ENCODE measurements at regions of chr21 and their contacts with region 1.

Region 1: DNA sequence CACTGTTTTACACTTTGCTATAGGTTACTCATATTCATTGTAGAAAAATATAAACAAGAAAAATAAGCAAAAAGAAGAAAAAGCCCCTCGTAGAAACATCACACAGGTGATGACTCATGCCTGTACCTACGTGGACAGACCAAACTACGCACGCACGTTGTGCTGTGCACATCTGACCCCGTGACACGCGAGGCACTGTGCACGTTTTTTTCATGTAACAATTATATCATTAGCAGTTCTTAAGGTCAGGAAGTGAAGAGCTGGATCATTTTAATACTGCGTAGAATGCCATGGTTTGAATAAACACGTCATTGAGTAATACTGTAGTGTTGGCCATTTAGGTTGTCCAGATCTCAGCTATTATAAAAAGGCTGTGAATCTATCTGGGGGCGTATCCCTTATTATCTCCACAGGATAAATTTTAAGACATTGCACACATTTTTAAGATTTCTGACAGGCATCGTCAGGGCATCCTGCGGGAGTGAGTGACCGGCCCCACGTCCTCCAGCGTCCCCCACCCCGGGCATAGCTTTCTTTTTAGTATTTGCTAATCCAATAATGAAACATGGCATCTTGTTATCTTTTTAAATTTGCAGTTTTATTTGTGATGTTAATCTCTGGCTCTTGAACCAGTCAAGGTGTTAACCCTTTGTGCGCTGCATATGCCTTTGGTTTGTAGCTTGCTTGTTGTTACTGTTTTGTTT is 23.4 kb upstream of the ADARB1 start:
- DNase-seq: peak in 1 of 2 donors; percentile 88
- H3K4me3 ChIP-seq: no peak overlapping the region
- H3K27ac ChIP-seq: peak overlapping the region; percentile 98 to 99
- H3K4me1 ChIP-seq: peaks cover 21 to 55% of the 10 kb centered on the region in 2 donors
- H3K27me3 ChIP-seq: no peaks in the 10 kb centered on the region
- CTCF ChIP-seq: no peak

Region 2: GRCh38 chr21:44949779-44950198 is 101.1 kb before region 1 on chr21:
- intact Hi-C with region 1: loop called (anchors 2 kb)
- DNase-seq: peak; percentile 50 to 94
- H3K4me3 ChIP-seq: peak overlapping the region in 1 of 2 donors; percentile 10
- H3K27ac ChIP-seq: peak overlapping the region; percentile 82 to 96
- H3K4me1 ChIP-seq: peaks cover 23 to 40% of the 10 kb centered on the region in 2 donors
- H3K27me3 ChIP-seq: no peaks in the 10 kb centered on the region
- CTCF ChIP-seq: peak; percentile 96 to 98 (median 97)

Region 3: DNA sequence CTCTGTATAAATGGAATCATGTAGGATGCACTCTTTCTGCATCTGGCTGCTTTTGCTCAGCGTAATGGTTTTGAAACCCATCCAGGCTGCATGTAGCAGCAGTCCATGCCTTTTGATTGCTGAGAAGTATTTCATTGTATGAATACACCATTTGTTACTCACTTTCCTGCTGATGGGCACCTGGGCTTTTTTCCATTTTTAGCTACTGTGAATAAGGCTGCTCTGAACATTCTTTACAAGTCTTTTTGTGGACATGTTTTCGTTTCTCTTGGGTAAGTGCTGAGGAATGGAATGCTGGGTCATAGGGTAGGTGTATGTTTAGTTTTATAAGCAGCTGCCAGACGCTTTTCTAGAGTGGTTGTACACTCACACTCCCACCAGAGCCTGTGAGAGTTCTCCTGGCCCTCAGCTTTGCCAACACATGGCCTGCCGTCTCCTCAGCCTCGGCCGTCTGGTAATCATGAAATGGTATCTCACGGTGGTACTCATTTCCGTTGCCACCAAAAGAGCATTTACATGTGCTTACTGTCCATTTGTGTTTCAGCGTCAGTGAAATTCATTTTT is 88.5 kb before region 1 on chr21:
- intact Hi-C with region 1: loop called (anchors 1 kb)
- DNase-seq: peak in 1 of 2 donors; percentile 91
- H3K4me3 ChIP-seq: no peak overlapping the region
- H3K27ac ChIP-seq: peak overlapping the region; percentile 84 to 90
- H3K4me1 ChIP-seq: peaks cover 38 to 74% of the 10 kb centered on the region in 2 donors
- H3K27me3 ChIP-seq: no peaks in the 10 kb centered on the region
- CTCF ChIP-seq: no peak

Region 4: GRCh38 chr21:45019076-45019956 is 31.6 kb before region 1 on chr21:
- intact Hi-C with region 1: loop called (anchors 2 kb)
- DNase-seq: peak; percentile 22 to 90
- H3K4me3 ChIP-seq: peak overlapping the region; percentile 44 to 63
- H3K27ac ChIP-seq: peak overlapping the region; percentile 93 to 95
- H3K4me1 ChIP-seq: peaks cover 8 to 31% of the 10 kb centered on the region in 2 donors
- H3K27me3 ChIP-seq: no peaks in the 10 kb centered on the region
- CTCF ChIP-seq: no peak

Region 5: DNA sequence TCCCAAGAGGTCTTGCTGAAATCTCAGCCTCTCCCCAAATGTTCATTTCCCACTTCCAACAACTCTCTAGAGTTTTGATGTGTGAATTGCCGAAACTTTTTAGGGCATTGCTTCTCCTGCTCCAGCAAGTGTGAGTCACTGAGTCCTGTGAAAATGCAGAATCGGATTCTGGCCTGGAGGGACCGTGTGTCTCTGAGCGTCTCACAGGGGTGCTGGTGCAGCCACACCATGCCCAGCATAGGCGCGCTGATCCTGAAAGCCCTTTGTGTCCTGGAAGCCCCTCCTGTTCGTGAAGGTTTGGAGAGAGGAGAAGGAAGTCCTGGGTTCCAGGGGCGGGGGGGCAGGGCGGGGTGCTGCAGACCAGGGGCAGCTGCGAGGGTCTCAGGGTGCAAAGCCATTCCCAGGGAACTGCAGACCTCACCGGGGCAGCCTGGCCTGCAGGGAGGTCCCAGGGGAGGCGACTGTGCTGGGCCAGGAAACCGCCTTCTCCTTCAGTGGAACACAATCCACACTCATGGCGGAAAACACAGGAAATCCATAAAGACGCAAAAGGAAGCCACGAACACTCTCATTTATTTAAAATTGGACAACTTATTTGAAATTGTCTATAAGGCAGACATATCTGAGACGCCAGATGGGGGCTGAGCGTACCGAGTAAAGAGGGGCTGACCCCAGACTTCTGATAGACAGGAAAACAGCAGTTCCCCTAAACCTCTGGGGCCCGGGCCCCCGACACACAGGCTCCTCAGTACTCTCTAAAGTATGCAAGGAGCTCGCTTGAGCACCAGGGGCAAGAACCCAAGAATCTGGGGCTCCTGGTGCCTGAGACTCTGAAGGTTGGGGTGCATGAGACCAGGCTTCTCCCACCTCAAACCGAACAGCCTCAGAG is 20.0 kb before region 1 on chr21:
- intact Hi-C with region 1: loop called (anchors 2 kb)
- DNase-seq: peak; percentile 8 to 76
- H3K4me3 ChIP-seq: peak overlapping the region in 1 of 2 donors; percentile 16
- H3K27ac ChIP-seq: peak overlapping the region; percentile 87 to 88
- H3K4me1 ChIP-seq: peaks cover 54 to 71% of the 10 kb centered on the region in 2 donors
- H3K27me3 ChIP-seq: no peaks in the 10 kb centered on the region
- CTCF ChIP-seq: no peak

Region 6: GRCh38 chr21:45064091-45064490 is 13.2 kb after region 1 on chr21:
- intact Hi-C with region 1: no loop called
- DNase-seq: no peak
- H3K4me3 ChIP-seq: no peak overlapping the region
- H3K27ac ChIP-seq: peak overlapping the region; percentile 76 to 78
- H3K4me1 ChIP-seq: peaks cover 7 to 17% of the 10 kb centered on the region in 2 donors
- H3K27me3 ChIP-seq: no peaks in the 10 kb centered on the region
- CTCF ChIP-seq: no peak

Region 7: DNA sequence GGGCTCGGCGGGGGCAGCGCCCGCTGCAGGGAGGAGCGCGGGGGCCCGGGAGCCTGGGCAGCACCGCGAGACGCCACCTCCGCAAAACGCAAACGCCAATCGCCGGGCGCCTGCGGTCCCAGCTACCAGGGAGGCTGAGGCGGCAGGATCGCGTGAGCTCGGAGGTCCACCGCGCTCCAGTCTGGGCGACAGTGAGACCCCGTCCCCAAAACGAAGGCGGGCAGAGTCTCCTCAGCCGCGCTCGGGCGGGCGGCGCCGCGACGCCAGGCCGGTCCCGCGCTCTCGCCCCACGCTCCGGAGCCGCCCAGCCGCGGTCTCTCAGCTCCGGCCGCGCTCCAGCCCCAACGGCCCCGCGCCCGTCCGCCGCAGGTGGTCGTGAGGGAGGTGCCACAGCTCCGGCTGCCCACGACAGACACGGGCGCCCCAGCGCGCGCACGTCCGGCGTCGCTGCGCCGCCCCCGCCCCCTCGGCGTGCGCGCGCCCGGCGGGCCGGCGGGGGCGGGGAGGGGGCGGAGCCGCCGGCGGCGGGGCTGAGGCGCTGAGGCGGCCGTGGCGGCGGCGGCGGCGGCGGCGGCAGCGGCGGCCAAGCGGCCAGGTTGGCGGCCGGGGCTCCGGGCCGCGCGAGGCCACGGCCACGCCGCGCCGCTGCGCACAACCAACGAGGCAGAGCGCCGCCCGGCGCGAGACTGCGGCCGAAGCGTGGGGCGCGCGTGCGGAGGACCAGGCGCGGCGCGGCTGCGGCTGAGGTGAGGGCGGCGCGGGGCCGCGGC is 23.3 kb after region 1 on chr21 and contains the start of gene ADARB1:
- intact Hi-C with region 1: loop called (anchors 2 kb)
- DNase-seq: peak in 1 of 2 donors; percentile 74
- H3K4me3 ChIP-seq: peak within 1 kb of the TSS; percentile 81 to 98
- H3K27ac ChIP-seq: peak within 1 kb of the TSS; percentile 91
- H3K4me1 ChIP-seq: peaks cover 1 to 21% of the 10 kb centered on the region in 2 donors
- H3K27me3 ChIP-seq: no peaks in the 10 kb centered on the region
- CTCF ChIP-seq: no peak
- total RNA-seq, gene ADARB1: 82.9 TPM

Region 8: GRCh38 chr21:45129189-45129923 is 78.4 kb after region 1 on chr21:
- intact Hi-C with region 1: loop called (anchors 1 kb)
- DNase-seq: peak in 1 of 2 donors; percentile 78
- H3K4me3 ChIP-seq: peak overlapping the region in 1 of 2 donors; percentile 49
- H3K27ac ChIP-seq: peak overlapping the region; percentile 90 to 94
- H3K4me1 ChIP-seq: peaks cover 30 to 53% of the 10 kb centered on the region in 2 donors
- H3K27me3 ChIP-seq: no peaks in the 10 kb centered on the region
- CTCF ChIP-seq: no peak